ENCODE measurements at regions of chr22 and their contacts with region 1.

Region 1: DNA sequence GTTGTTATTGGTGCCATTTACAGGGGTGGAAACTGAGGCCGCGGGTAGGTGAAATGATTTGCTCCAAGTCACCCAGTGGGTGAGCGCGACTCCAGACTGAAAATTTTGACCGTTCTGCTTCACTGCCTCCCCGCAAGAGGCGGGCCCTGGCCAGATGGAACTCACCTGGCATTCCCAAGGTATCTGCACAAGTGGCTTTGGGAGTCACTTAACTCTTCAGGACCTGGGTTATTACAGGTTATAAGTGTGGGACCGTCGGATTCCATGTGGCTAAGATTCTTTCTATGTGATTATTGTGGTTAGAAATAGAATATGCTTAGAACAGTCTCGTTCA is 598 bp downstream of the CABIN1 start:
- DNase-seq: no peak
- H3K4me3 ChIP-seq: peak overlapping the region; percentile 58 to 98 (median 74)
- H3K27ac ChIP-seq: peak overlapping the region; percentile 78 to 89 (median 82)
- H3K4me1 ChIP-seq: peaks cover 0 to 20% (median 15%) of the 10 kb centered on the region in 4 donors
- H3K27me3 ChIP-seq: no peaks in the 10 kb centered on the region
- CTCF ChIP-seq: no peak
- EP300 ChIP-seq: no peak
- POLR2A ChIP-seq: no peak

Region 2: DNA sequence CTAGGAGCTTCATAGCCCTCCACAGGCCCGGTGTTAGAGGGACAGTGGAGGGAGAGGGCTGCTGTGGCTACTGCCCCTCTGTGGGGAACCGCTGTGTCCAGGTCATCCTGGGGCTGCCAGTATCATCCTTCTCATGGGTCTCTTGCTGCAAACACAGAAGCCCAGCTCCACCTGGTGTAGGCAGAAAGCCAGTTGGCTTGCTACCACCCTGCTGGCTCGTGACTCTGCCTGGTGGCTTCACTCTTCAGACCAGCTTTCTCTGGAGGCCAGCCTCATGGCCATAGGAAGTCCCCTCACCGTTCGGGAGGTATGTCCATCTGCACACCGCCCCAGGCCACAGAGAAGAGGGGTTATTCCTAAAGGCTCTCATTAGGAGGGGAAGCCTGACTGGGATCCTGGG is 150.2 kb after region 1 on chr22:
- intact Hi-C with region 1: loop called (anchors 5 kb)
- DNase-seq: peak; percentile 84
- H3K4me3 ChIP-seq: no peak overlapping the region
- H3K27ac ChIP-seq: peak overlapping the region; percentile 24 to 91 (median 72)
- H3K4me1 ChIP-seq: peaks cover 0 to 82% (median 73%) of the 10 kb centered on the region in 4 donors
- H3K27me3 ChIP-seq: no peaks in the 10 kb centered on the region
- CTCF ChIP-seq: no peak
- EP300 ChIP-seq: no peak
- POLR2A ChIP-seq: no peak

Measured in sigmoid colon (tissue), 7 donors.